Right ventricle myocardium inferior (tissue), 1 donor: ENCODE measurements at regions of chr20 and their contacts with region 1.

Region 1: GRCh38 chr20:60467078-60467477 is 508.9 kb downstream of the CDH26 start:
- DNase-seq: no peak
- ATAC-seq: peak; percentile 80

Region 2: GRCh38 chr20:60137629-60138245 is 329.3 kb before region 1 on chr20:
- intact Hi-C with region 1: loop called (anchors 10 kb)
- DNase-seq: no peak
- ATAC-seq: peak; percentile 40